ENCODE measurements at regions of chr16 and their contacts with region 1.

Region 1: GRCh38 chr16:8958344-8959167 is 5.2 kb downstream of the USP7 start:
- DNase-seq: no peak
- ATAC-seq: no peak
- H3K4me3 ChIP-seq: peak overlapping the region in 2 of 5 experiments; percentile 3 to 17
- H3K4me3 Mint-ChIP-seq: peak overlapping the region; percentile 90
- H3K27ac ChIP-seq: peak overlapping the region in 1 of 2 donors; percentile 89
- H3K27ac Mint-ChIP-seq: peak overlapping the region; percentile 85
- H3K4me1 ChIP-seq: peaks cover 72 to 80% of the 10 kb centered on the region in 2 donors
- H3K4me1 Mint-ChIP-seq: peaks cover 76% of the 10 kb centered on the region
- H3K27me3 ChIP-seq: no peaks in the 10 kb centered on the region
- H3K27me3 Mint-ChIP-seq: no peaks in the 10 kb centered on the region
- CTCF ChIP-seq: no peak

Region 2: DNA sequence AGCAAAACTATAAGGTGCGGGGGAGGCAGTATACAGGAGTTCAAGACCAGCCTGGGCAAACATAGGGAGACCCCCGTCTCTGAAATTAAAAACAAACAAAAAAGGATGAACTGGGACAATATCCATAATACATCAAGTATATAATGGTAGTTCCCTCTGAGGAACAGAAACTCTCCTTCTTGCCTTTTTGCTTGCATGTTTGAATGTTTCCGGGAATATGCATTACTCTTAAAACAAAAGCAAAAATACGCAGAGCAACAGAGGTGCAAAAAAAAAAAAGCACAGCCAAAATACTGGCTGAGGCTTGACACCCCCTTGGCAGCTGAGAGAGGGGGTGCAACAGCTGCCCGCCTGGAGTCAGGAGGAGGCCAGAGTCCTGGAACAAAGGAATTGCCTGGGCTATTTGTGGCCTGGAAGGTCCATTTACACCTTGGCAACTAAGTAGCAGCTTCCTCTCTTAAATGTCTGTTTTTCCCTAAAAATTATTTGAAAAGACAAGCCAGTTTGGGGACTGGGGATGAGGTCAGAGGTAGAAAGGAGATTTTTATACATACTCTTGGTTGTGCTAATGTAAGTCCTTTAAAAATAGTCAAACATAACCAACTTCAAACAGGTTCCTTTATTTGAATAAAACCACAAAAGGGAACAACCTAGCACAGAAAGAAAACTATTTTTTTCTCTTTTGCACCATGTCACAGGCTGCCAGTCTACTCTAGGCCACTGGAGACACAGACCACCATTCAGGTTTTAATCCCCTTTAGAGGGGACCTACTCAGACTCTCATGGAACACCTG is 14.4 kb before region 1 on chr16:
- CTCF ChIA-PET with region 1: interaction called, 10 read pairs
- POLR2A ChIA-PET with region 1: interaction called, 3 read pairs
- intact Hi-C with region 1: loop called (anchors 2 kb)
- DNase-seq: peak; percentile 69
- ATAC-seq: peak; percentile 87
- H3K4me3 ChIP-seq: peak overlapping the region; percentile 26 to 62 (median 36)
- H3K4me3 Mint-ChIP-seq: peak overlapping the region; percentile 87
- H3K27ac ChIP-seq: peak overlapping the region; percentile 61 to 73
- H3K27ac Mint-ChIP-seq: peak overlapping the region; percentile 87
- H3K4me1 ChIP-seq: peaks cover 93 to 99% of the 10 kb centered on the region in 2 donors
- H3K4me1 Mint-ChIP-seq: peaks cover 97% of the 10 kb centered on the region
- H3K27me3 ChIP-seq: no peaks in the 10 kb centered on the region
- H3K27me3 Mint-ChIP-seq: no peaks in the 10 kb centered on the region
- CTCF ChIP-seq: no peak

Measured in B cell (primary cell).